Vagina (tissue), 2 donors: ENCODE measurements at regions of chr5 and their contacts with region 1.

Region 1: DNA sequence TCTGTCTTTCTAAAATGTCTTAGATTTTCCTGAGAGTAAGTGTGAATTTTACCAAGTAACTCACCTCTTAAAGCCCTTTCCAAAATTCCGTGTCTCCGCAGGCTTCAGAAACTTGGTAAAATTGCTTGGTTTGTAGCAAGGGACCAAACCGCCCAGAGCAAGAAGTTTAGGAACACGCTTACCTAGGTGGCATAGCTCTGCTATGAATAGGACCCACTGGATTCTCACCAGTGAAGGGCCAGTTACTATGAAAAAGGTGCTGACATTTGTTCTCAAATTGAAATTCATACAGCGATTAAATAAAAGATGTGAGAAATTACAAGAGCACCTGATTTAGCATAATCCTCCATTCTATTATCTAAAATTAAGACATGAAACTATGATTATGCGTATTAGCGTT is 6.7 kb downstream of the NME5 start:
- DNase-seq: no peak
- H3K4me3 ChIP-seq: no peak overlapping the region
- H3K27ac ChIP-seq: no peak overlapping the region
- H3K4me1 ChIP-seq: no peaks in the 10 kb centered on the region
- H3K27me3 ChIP-seq: no peaks in the 10 kb centered on the region
- CTCF ChIP-seq: no peak
- POLR2A ChIP-seq: no peak

Region 2: DNA sequence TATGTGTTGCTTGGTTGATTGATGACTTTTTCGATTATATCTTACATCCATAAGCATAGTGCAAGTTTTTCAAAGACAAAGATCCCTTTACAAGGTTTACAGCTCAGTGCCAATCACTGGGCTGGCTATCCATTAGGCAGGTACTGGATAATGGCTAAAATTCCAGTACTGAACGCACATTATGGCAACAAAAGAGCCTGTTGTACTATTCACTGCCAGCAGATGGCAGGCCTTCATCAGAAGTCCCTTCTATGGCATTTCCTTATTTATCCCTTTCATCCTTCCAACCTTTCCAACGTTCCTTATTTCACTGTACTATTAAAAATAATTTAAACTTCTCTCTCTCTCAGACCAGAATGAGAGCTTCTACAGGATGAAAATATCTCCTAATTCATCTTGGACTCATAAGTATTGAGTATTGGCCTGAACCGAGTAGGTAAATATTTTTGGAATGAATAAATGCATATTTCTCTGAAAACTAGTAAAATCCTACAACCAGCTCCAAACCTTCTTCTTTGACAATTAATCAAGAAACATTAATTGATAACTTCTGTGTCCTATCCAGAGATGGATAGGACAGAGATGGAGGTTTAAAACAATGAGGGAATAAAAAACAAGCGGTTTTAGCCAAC is 55.4 kb before region 1 on chr5:
- intact Hi-C with region 1: loop called (anchors 5 kb)
- DNase-seq: no peak
- H3K4me3 ChIP-seq: no peak overlapping the region
- H3K27ac ChIP-seq: no peak overlapping the region
- H3K4me1 ChIP-seq: no peaks in the 10 kb centered on the region
- H3K27me3 ChIP-seq: no peaks in the 10 kb centered on the region
- CTCF ChIP-seq: peak; percentile 55 to 70 (median 56)
- POLR2A ChIP-seq: no peak